Body of pancreas (tissue), 4 donors: ENCODE measurements at regions of chr7 and their contacts with region 1.

Region 1: DNA sequence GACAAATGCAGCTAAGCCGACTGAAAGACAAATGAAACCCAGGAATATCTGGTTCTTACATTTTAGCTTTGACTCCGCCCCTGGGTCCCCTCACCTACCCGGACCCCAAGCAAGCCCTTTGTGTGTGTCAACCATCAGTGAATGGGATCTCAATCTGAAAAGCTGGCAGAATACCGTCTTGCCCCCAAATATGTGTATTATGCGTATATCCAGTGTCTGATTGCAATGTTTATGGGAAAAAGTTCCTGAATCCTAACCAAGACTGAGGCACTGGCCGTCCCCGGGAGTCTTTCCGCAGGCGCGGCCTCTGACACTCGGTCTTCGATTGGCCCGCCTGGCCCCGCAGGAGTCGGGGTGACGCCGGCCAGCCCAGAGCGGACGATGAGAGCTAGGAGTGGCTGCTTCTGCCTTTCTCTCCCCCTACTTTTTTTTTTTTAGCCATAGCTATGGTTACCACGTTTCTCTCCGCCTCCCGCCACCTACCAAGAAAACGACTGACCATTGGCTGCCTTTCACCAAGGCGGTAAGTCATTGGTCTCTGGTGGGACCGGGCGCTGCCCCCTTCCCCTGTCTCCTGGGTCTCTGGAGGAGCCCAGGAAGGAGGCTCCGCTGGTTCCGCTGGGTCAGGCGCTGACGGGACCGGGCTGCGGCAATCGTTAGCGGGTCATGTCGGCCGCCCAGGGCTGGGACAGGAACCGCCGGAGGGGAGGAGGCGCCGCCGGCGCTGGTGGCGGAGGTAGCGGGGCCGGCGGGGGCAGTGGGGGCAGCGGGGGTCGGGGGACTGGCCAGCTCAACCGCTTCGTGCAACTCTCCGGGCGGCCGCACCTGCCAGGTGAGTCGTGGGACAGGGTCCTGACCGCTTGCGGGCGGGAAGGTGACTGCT is at the start of gene KLHDC10:
- DNase-seq: peak; percentile 96 to 99 (median 97)
- ATAC-seq: peak; percentile 98
- H3K4me3 ChIP-seq: peak within 1 kb of the TSS; percentile 96 to 99
- H3K27ac ChIP-seq: peak within 1 kb of the TSS; percentile 79 to 95 (median 86)
- H3K4me1 ChIP-seq: peaks cover 37% of the 10 kb centered on the region
- H3K27me3 ChIP-seq: no peaks in the 10 kb centered on the region
- CTCF ChIP-seq: peak in 1 of 7 experiments; percentile 2
- POLR2A ChIP-seq: peak in 2 of 3 donors; percentile 74 to 80
- total RNA-seq, gene KLHDC10: 10.5 to 15.6 TPM

Region 2: DNA sequence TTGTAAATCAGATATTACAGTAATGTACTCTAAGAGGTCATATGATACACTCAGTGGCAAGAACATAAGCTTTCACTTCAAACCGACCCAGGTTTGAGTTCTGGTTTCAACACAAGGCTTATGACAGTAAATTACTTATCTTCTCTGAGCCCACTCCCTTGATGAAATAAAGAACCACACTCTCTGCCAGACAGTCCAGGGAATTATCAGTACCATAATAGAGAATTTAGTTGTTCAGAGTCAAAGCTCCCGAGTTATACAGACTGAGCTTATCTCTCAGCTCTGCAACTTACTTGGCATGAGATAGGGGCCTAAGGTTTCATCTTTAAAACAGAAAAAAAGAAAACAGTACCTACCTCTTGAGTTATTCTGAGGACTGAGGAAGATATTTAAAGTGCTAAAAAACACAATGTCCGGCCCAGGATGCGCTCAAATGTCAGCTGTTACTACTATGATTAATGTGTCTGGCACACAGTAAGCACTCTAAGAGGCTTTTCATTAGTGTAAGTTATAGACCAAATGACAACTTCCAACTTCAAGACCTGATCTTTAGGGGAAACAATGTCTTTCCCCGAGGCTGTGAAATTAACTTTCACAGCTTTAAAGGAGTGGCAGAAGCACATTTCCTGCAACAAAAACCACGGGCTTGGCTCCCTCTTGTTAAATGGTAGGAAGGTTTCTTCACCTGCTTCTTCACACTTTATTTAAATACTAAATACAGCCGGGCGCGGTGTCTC is 155.5 kb before region 1 on chr7:
- intact Hi-C with region 1: no loop called
- DNase-seq: no peak
- ATAC-seq: no peak
- H3K4me3 ChIP-seq: no peak overlapping the region
- H3K27ac ChIP-seq: peak overlapping the region in 3 of 4 donors; percentile 19 to 79 (median 52)
- H3K4me1 ChIP-seq: peaks cover 88% of the 10 kb centered on the region
- H3K27me3 ChIP-seq: no peaks in the 10 kb centered on the region
- CTCF ChIP-seq: no peak
- POLR2A ChIP-seq: no peak

Region 3: DNA sequence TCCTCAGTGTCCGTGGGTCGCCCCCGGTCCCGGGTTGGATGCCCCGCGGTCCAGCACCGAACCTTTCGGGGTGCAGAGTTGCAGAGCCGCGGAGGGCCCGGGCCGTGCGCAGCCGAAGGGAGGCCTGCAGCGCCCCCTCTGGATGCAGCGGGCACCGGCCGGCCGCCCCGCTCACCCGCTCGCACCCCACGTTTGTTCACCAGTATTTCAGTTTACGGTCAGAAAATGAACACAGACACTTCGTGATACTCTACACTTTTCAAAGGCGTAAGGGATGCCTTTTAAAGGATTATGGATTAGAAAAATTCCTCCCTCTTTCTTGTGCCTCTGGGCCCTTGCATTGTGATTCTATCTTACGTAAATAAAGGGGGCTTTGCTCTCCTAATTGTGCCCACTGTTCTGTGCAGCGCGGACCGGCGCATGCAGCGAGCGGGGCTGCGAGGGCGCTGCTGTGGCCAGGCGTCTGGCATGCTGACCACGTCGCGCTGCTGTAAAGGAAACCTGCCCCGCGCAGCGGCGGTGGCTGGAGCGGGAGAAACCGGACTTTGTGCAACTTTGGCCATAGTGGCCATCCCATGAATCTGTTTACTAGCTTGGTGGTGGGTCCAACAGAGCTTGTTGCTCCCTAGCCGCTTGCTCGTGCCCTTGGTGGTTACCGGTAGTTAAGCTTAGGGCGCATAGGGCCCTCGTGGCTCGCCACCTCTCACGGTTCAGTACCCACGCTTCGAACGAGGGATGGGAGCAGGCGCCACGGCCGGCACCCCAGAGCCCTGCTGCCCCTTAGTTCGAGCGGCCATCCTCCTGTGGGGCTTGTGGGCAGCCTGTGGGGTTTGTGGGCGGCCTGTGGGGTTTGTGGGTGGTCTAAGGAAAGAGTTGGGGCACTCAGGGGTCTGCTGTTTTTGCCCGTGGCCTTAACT is 420.9 kb after region 1 on chr7:
- intact Hi-C with region 1: loop called (anchors 10 kb)
- DNase-seq: peak; percentile 40 to 68 (median 50)
- ATAC-seq: peak; percentile 25
- H3K4me3 ChIP-seq: no peak overlapping the region
- H3K27ac ChIP-seq: peak overlapping the region in 2 of 4 donors; percentile 5 to 30
- H3K4me1 ChIP-seq: peaks cover 71% of the 10 kb centered on the region
- H3K27me3 ChIP-seq: no peaks in the 10 kb centered on the region
- CTCF ChIP-seq: peak; percentile 12 to 60 (median 52)
- POLR2A ChIP-seq: peak in 1 of 3 donors; percentile 17

Region 4: GRCh38 chr7:130721486-130722280 is 651.5 kb after region 1 on chr7:
- intact Hi-C with region 1: loop called (anchors 10 kb)
- DNase-seq: peak; percentile 75 to 86 (median 82)
- ATAC-seq: peak; percentile 89
- H3K4me3 ChIP-seq: no peak overlapping the region
- H3K27ac ChIP-seq: no peak overlapping the region
- H3K4me1 ChIP-seq: no peaks in the 10 kb centered on the region
- H3K27me3 ChIP-seq: no peaks in the 10 kb centered on the region
- CTCF ChIP-seq: peak in 6 of 7 experiments; percentile 37 to 72 (median 67)
- POLR2A ChIP-seq: no peak